ENCODE measurements at regions of chr7 and their contacts with region 1.

Region 1: GRCh38 chr7:36487756-36488336 is 98.2 kb downstream of the ANLN start:
- DNase-seq: peak in 9 of 10 donors; percentile 12 to 74 (median 49)
- ATAC-seq: peak; percentile 67 to 74
- H3K4me3 Mint-ChIP-seq: no peak overlapping the region
- H3K27ac Mint-ChIP-seq: peak overlapping the region in 1 of 10 donors; percentile 74
- H3K4me1 Mint-ChIP-seq: peaks cover 0 to 5% (median 2%) of the 10 kb centered on the region in 4 donors
- H3K27me3 Mint-ChIP-seq: peaks cover 0 to 3% (median 0%) of the 10 kb centered on the region in 5 donors

Region 2: GRCh38 chr7:36670585-36671431 is 183.0 kb after region 1 on chr7:
- POLR2A ChIA-PET with region 1: interaction called, 17 read pairs
- DNase-seq: peak; percentile 40 to 85 (median 72)
- ATAC-seq: peak; percentile 87 to 91
- H3K4me3 Mint-ChIP-seq: peak overlapping the region in 7 of 10 donors; percentile 27 to 71 (median 42)
- H3K27ac Mint-ChIP-seq: peak overlapping the region; percentile 12 to 94 (median 83)
- H3K4me1 Mint-ChIP-seq: peaks cover 22 to 38% (median 29%) of the 10 kb centered on the region in 4 donors
- H3K27me3 Mint-ChIP-seq: no peaks in the 10 kb centered on the region

Measured in naive thymus-derived CD8-positive, alpha-beta T cell (primary cell).